ENCODE measurements at regions of chr5 and their contacts with region 1.

Region 1: DNA sequence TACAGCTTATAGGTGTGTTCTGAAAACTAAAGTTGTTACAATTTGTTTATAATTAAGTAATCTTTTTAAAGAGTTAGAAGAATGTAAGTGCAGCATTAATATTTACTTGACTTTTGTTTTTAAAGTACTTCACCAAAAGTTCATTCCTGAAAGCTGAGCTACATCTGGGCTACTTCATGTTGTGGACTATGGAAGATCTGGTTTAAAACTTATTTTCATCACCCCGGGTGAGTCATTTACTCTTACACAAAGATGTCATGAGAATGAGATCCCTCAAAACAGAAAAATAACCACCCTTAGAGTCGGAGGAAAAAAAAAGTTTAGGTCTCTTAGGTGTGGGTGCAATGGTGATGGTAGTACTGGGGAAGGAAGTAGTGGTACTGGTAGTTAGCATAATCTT is 5.1 kb downstream of the POU5F2 start:
- DNase-seq: no peak
- H3K4me3 ChIP-seq: no peak overlapping the region
- H3K27ac ChIP-seq: no peak overlapping the region
- H3K4me1 ChIP-seq: no peaks in the 10 kb centered on the region
- H3K27me3 ChIP-seq: no peaks in the 10 kb centered on the region
- CTCF ChIP-seq: no peak

Region 2: DNA sequence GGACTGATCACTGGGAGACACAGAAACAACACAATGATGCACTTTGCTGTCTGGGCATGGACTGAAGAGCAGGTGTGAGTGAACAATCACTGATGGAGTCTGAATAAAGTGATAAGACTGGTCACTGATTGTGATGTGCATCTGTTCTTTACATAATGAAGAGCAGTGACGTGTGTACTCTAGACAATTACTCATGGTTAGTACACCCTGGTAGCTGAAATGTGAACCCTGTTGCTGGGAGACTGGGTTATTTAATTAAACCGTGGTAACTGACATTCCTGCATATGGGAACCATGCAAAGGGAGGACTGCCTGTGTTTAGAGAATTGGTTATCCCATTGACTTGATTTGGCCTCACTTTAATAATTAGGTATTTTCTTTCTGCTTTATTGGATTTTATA is 358.2 kb before region 1 on chr5:
- CTCF ChIA-PET with region 1: no interaction called
- dilution Hi-C with region 1: no loop called
- in situ Hi-C with region 1: no loop called
- intact Hi-C with region 1: no loop called
- DNase-seq: peak; percentile 89
- H3K4me3 ChIP-seq: no peak overlapping the region
- H3K27ac ChIP-seq: no peak overlapping the region
- H3K4me1 ChIP-seq: peaks cover 9% of the 10 kb centered on the region
- H3K27me3 ChIP-seq: no peaks in the 10 kb centered on the region
- CTCF ChIP-seq: no peak

Region 3: GRCh38 chr5:94640176-94640575 is 903.9 kb after region 1 on chr5:
- CTCF ChIA-PET with region 1: interaction called, 10 read pairs
- dilution Hi-C with region 1: no loop called
- in situ Hi-C with region 1: no loop called
- intact Hi-C with region 1: no loop called
- DNase-seq: no peak
- H3K4me3 ChIP-seq: no peak overlapping the region
- H3K27ac ChIP-seq: no peak overlapping the region
- H3K4me1 ChIP-seq: no peaks in the 10 kb centered on the region
- H3K27me3 ChIP-seq: no peaks in the 10 kb centered on the region
- CTCF ChIP-seq: no peak

Measured in mammary epithelial cell (primary cell).